Breast epithelium (tissue), 4 donors: ENCODE measurements at regions of chr5 and their contacts with region 1.

Region 1: GRCh38 chr5:173989432-173990082 is 587 bp downstream of the C5orf47 start:
- DNase-seq: no peak
- H3K4me3 ChIP-seq: no peak overlapping the region
- H3K27ac ChIP-seq: no peak overlapping the region
- H3K4me1 ChIP-seq: no peaks in the 10 kb centered on the region
- H3K27me3 ChIP-seq: no peaks in the 10 kb centered on the region
- CTCF ChIP-seq: no peak
- POLR2A ChIP-seq: no peak

Region 2: GRCh38 chr5:174189654-174190541 is 200.3 kb after region 1 on chr5:
- intact Hi-C with region 1: loop called (anchors 5 kb)
- DNase-seq: no peak
- H3K4me3 ChIP-seq: no peak overlapping the region
- H3K27ac ChIP-seq: no peak overlapping the region
- H3K4me1 ChIP-seq: no peaks in the 10 kb centered on the region
- H3K27me3 ChIP-seq: peaks cover 0 to 5% of the 10 kb centered on the region in 2 donors
- CTCF ChIP-seq: no peak
- POLR2A ChIP-seq: no peak